ENCODE measurements at regions of chr15 and their contacts with region 1.

Region 1: DNA sequence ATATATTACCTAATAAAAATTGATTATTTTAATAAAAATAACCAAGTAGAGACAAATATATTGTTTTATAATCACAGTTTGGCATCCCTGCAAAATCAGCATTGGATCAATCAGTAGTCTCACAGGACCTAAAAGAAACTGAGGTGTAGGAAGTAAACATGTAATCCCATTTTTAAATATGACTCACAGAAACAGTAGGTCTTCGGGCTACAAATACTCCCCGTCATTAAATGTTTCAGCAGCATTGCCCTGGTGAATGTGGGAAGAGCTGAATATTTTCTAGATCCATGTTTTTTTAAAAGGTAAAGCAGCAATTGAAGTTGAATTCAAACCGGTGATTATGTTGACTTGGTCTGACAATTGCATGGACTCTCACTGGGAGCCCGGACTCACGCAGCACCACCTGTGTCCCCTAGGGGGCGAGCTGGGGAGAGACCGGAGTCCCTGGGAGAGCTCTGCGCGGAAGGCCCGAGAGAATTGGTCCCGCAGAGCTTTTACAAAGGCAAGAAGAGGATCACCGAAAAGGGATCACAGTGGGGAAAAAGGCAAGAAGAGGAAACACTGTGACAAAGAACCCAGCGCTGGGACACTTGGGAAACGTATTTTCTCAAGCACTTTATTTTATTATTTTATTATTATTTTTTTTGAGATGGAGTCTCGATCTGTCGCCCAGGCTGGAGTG is 17.2 kb upstream of the USP3 start:
- DNase-seq: peak; percentile 62 to 92 (median 85)
- ATAC-seq: peak; percentile 88 to 93 (median 91)
- H3K4me3 ChIP-seq: no peak overlapping the region
- H3K4me3 Mint-ChIP-seq: peak overlapping the region in 2 of 3 donors; percentile 26 to 46
- H3K27ac ChIP-seq: peak overlapping the region; percentile 38
- H3K27ac Mint-ChIP-seq: peak overlapping the region; percentile 74 to 87
- H3K4me1 ChIP-seq: peaks cover 36 to 56% of the 10 kb centered on the region in 2 experiments
- H3K4me1 Mint-ChIP-seq: peaks cover 67 to 81% (median 80%) of the 10 kb centered on the region in 3 donors
- H3K27me3 ChIP-seq: no peaks in the 10 kb centered on the region
- H3K27me3 Mint-ChIP-seq: no peaks in the 10 kb centered on the region

Region 2: GRCh38 chr15:63430766-63431449 is 56.3 kb before region 1 on chr15:
- CTCF ChIA-PET with region 1: no interaction called
- POLR2A ChIA-PET with region 1: no interaction called
- DNase-seq: no peak
- ATAC-seq: no peak
- H3K4me3 ChIP-seq: no peak overlapping the region
- H3K4me3 Mint-ChIP-seq: no peak overlapping the region
- H3K27ac ChIP-seq: no peak overlapping the region
- H3K27ac Mint-ChIP-seq: no peak overlapping the region
- H3K4me1 ChIP-seq: peaks cover 2 to 6% of the 10 kb centered on the region in 2 experiments
- H3K4me1 Mint-ChIP-seq: peaks cover 2 to 16% (median 5%) of the 10 kb centered on the region in 3 donors
- H3K27me3 ChIP-seq: no peaks in the 10 kb centered on the region
- H3K27me3 Mint-ChIP-seq: no peaks in the 10 kb centered on the region

Region 3: DNA sequence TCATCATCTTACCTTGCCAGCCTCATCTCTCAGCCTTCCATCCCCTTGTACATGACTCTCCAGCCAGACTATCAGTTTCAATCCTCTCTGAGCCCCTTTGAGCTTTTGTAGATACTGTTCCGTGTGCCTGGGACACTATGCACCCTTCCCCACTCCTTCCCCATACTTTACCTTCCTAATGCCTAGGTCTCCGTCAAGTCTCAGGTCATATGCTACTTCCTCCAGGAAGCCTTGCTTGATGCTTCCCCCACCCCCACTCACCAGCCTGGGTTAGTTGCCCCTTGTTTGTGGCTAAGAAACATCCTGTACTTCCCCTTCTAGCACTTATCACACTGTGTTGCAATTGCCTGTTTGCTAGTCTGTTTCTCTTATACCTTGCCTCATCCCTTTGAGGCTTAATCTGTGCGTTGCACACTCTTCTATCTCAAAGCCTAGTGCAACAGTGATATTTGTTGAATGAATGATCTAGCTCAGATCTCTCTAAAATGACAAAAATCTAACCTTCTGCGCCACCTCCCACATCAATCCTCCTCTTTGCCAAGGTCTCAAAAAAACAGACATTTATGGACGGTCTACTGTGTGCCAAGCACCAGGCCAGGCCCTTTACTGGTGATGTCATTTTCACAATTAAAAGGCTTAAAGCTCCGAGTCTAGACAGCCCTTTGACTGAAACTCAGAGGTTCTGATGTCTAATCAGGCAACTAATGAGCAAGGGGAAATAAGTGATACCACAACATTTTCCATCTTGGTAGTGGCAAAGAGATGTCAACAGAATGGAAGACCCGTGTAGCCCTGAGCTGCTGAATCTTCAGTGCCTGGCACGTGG is 10.6 kb after region 1 on chr15:
- CTCF ChIA-PET with region 1: interaction called in 1 of 2 experiments, 29 read pairs
- POLR2A ChIA-PET with region 1: interaction called, 3 read pairs
- DNase-seq: peak; percentile 59 to 90 (median 79)
- ATAC-seq: peak; percentile 77 to 85 (median 82)
- H3K4me3 ChIP-seq: peak overlapping the region; percentile 27 to 36
- H3K4me3 Mint-ChIP-seq: no peak overlapping the region
- H3K27ac ChIP-seq: peak overlapping the region; percentile 99
- H3K27ac Mint-ChIP-seq: no peak overlapping the region
- H3K4me1 ChIP-seq: peaks cover 69 to 88% of the 10 kb centered on the region in 2 experiments
- H3K4me1 Mint-ChIP-seq: peaks cover 50 to 82% (median 58%) of the 10 kb centered on the region in 3 donors
- H3K27me3 ChIP-seq: no peaks in the 10 kb centered on the region
- H3K27me3 Mint-ChIP-seq: no peaks in the 10 kb centered on the region

Region 4: GRCh38 chr15:63504247-63504978 is 17.2 kb after region 1 on chr15 and contains the start of gene USP3:
- CTCF ChIA-PET with region 1: interaction called, 8 to 28 read pairs
- POLR2A ChIA-PET with region 1: interaction called, 4 to 5 read pairs
- DNase-seq: peak; percentile 84 to 96 (median 91)
- ATAC-seq: peak; percentile 71 to 85 (median 75)
- H3K4me3 ChIP-seq: peak within 1 kb of the TSS; percentile 84 to 99
- H3K4me3 Mint-ChIP-seq: peak within 1 kb of the TSS; percentile 94 to 99 (median 96)
- H3K27ac ChIP-seq: peak within 1 kb of the TSS; percentile 99
- H3K27ac Mint-ChIP-seq: peak within 1 kb of the TSS; percentile 99
- H3K4me1 ChIP-seq: peaks cover 43 to 69% of the 10 kb centered on the region in 2 experiments
- H3K4me1 Mint-ChIP-seq: peaks cover 74 to 75% (median 75%) of the 10 kb centered on the region in 3 donors
- H3K27me3 ChIP-seq: no peaks in the 10 kb centered on the region
- H3K27me3 Mint-ChIP-seq: no peaks in the 10 kb centered on the region
- total RNA-seq, gene USP3: 123 to 265 (median 130) TPM